CD8-positive, alpha-beta memory T cell (primary cell): ENCODE measurements at regions of chr12 and their contacts with region 1.

Region 1: DNA sequence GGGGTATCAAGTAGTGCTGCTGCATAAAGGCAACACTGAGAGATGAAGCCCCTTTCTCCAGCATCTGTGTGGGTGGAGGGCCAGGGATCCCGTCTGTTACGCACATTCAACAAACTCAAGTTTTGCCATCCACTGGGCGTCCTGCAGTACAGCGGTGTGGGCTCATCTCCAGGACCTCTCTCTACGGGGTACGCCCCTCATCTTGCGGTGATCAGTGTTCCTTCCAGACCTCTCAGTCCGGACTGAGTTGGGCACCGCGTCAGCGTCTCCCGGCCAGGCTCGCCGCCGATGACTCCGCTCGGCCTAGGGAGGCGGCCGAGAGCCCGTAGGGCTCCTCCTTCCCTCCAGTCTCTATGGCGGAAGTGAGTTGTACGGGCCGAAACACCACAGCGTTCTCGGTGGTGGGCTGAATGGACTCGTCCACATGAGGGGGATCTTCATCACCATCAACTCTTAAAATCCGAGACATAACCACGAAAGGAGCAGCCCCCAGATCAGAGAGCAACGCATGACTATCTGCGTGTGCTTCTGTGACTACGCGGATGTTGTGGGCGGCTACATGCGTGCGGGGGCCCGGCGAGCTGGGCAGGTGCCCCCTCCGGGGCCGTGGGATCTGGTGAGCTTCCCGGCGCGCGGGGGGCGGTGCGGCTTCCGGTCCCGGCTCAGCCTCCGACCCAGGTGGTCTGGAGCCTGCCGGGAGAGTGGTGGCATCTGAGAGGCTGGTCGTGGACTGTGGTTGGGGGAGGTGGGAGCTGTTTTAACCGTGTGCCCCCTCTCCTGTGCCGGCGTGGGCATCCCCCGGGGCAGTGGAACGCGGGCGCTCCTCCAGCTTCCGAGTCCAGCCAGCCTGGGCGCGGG is at the start of gene ATG101:
- DNase-seq: peak; percentile 75 to 92 (median 90)
- H3K4me3 ChIP-seq: peak within 1 kb of the TSS; percentile 95
- H3K4me3 Mint-ChIP-seq: peak within 1 kb of the TSS; percentile 94 to 99 (median 98)
- H3K27ac ChIP-seq: peak within 1 kb of the TSS; percentile 90
- H3K27ac Mint-ChIP-seq: peak within 1 kb of the TSS; percentile 96 to 100 (median 99)
- H3K4me1 ChIP-seq: peaks cover 36% of the 10 kb centered on the region
- H3K4me1 Mint-ChIP-seq: peaks cover 40 to 51% (median 48%) of the 10 kb centered on the region in 3 donors
- H3K27me3 ChIP-seq: no peaks in the 10 kb centered on the region
- H3K27me3 Mint-ChIP-seq: peaks cover 3 to 14% of the 10 kb centered on the region in 2 donors
- total RNA-seq, gene ATG101: 49.7 to 56.2 TPM

Region 2: DNA sequence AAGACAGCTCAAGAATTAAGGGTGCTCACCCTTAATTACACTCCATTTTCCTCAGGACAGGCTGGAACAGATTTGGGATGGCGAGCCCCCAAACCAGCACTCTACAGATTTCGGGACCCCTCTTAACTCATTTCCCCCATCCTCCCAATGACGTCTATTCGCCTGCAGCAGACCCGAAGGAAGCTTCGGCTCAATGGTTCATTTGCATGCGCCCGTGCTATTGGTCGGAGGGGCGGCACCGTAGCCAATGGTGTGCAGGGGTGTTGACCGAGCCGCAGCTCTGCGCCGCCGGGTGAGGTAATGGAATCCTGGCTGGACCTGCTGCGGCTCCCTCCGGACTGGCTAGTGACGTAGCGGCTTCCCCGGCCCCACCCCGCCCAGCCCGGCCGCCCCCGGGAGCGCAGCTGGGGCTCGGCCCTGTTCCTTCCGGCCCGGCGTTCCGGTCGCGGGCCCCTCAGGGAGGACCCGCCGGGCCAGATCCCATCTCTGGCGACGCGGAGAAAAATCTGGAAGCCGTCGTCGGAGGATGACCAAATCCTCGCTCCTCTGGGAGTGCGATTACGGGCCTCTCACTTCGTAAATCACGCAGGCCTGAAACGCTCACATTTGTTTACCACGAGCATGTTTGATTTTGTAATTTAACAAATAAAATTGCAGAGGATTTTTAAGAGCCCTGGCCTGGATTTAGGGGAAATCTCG is 36.6 kb before region 1 on chr12:
- CTCF ChIA-PET with region 1: interaction called, 580 read pairs
- POLR2A ChIA-PET with region 1: interaction called, 15 read pairs
- DNase-seq: peak; percentile 83 to 93 (median 89)
- H3K4me3 ChIP-seq: peak overlapping the region; percentile 46
- H3K4me3 Mint-ChIP-seq: peak overlapping the region; percentile 59 to 90 (median 82)
- H3K27ac ChIP-seq: peak overlapping the region; percentile 58
- H3K27ac Mint-ChIP-seq: peak overlapping the region; percentile 79 to 98 (median 95)
- H3K4me1 ChIP-seq: peaks cover 28% of the 10 kb centered on the region
- H3K4me1 Mint-ChIP-seq: peaks cover 21 to 42% (median 28%) of the 10 kb centered on the region in 3 donors
- H3K27me3 ChIP-seq: no peaks in the 10 kb centered on the region
- H3K27me3 Mint-ChIP-seq: peaks cover 0 to 2% of the 10 kb centered on the region in 2 donors

Region 3: GRCh38 chr12:52050761-52051541 is 18.6 kb before region 1 on chr12 and contains the start of gene NR4A1:
- CTCF ChIA-PET with region 1: interaction called, 17 read pairs
- POLR2A ChIA-PET with region 1: interaction called, 20 read pairs
- DNase-seq: peak; percentile 99 to 100 (median 99)
- H3K4me3 ChIP-seq: peak within 1 kb of the TSS; percentile 91
- H3K4me3 Mint-ChIP-seq: peak within 1 kb of the TSS; percentile 79 to 99 (median 94)
- H3K27ac ChIP-seq: peak within 1 kb of the TSS; percentile 90
- H3K27ac Mint-ChIP-seq: peak within 1 kb of the TSS; percentile 85 to 100 (median 98)
- H3K4me1 ChIP-seq: peaks cover 27% of the 10 kb centered on the region
- H3K4me1 Mint-ChIP-seq: peaks cover 24 to 39% (median 28%) of the 10 kb centered on the region in 3 donors
- H3K27me3 ChIP-seq: no peaks in the 10 kb centered on the region
- H3K27me3 Mint-ChIP-seq: peaks cover 0 to 2% of the 10 kb centered on the region in 2 donors
- total RNA-seq, gene NR4A1: 20.4 to 23.4 TPM

Region 4: DNA sequence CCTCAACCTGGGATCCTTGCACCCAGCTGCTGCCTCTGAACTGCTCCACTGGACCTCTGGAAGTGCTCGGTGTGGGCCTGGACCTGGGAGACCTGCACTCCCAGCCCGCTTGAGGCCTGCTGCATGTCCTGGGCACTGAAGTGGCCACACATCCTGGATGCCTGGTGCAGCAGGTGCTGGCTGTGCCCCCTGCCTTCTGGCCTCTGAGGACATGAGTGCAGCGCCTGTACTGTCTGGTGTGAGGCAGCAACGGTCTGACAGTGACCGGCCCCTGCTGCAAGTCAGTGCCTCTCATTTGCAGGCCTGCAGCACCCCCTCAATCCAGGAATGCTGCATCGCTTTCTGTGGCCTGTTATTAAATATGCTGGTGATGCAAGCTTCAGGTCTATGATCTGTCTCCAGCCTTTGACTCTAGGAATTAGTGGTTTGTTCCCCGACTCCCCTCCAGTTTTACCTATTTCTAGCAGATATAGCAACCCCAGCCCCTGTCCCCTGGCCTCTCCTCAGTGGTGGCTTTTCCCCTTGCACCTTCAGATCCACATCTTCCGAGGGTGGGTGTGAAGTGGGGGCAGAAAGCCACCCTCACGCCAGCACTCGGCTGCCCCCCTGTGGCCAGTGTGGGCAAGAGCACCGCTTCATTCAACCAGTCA is 13.6 kb after region 1 on chr12:
- CTCF ChIA-PET with region 1: interaction called, 35 read pairs
- POLR2A ChIA-PET with region 1: interaction called, 3 read pairs
- DNase-seq: peak; percentile 58 to 77 (median 60)
- H3K4me3 ChIP-seq: no peak overlapping the region
- H3K4me3 Mint-ChIP-seq: no peak overlapping the region
- H3K27ac ChIP-seq: no peak overlapping the region
- H3K27ac Mint-ChIP-seq: peak overlapping the region in 2 of 8 donors; percentile 68 to 77
- H3K4me1 ChIP-seq: peaks cover 4% of the 10 kb centered on the region
- H3K4me1 Mint-ChIP-seq: peaks cover 2 to 6% (median 6%) of the 10 kb centered on the region in 3 donors
- H3K27me3 ChIP-seq: no peaks in the 10 kb centered on the region
- H3K27me3 Mint-ChIP-seq: peaks cover 6 to 15% of the 10 kb centered on the region in 2 donors

Region 5: GRCh38 chr12:52119398-52120254 is 50.1 kb after region 1 on chr12:
- CTCF ChIA-PET with region 1: no interaction called
- POLR2A ChIA-PET with region 1: no interaction called
- DNase-seq: peak in 3 of 5 donors; percentile 20 to 38 (median 21)
- H3K4me3 ChIP-seq: no peak overlapping the region
- H3K4me3 Mint-ChIP-seq: peak overlapping the region in 1 of 7 donors; percentile 25
- H3K27ac ChIP-seq: no peak overlapping the region
- H3K27ac Mint-ChIP-seq: no peak overlapping the region
- H3K4me1 ChIP-seq: no peaks in the 10 kb centered on the region
- H3K4me1 Mint-ChIP-seq: peaks cover 8 to 22% (median 9%) of the 10 kb centered on the region in 3 donors
- H3K27me3 ChIP-seq: no peaks in the 10 kb centered on the region
- H3K27me3 Mint-ChIP-seq: peaks cover 12 to 46% of the 10 kb centered on the region in 2 donors

Region 6: GRCh38 chr12:52181746-52182145 is 112.2 kb after region 1 on chr12:
- CTCF ChIA-PET with region 1: no interaction called
- POLR2A ChIA-PET with region 1: no interaction called
- DNase-seq: no peak
- H3K4me3 ChIP-seq: no peak overlapping the region
- H3K4me3 Mint-ChIP-seq: no peak overlapping the region
- H3K27ac ChIP-seq: no peak overlapping the region
- H3K27ac Mint-ChIP-seq: no peak overlapping the region
- H3K4me1 ChIP-seq: no peaks in the 10 kb centered on the region
- H3K4me1 Mint-ChIP-seq: peaks cover 0 to 5% (median 3%) of the 10 kb centered on the region in 3 donors
- H3K27me3 ChIP-seq: no peaks in the 10 kb centered on the region
- H3K27me3 Mint-ChIP-seq: peaks cover 0 to 2% of the 10 kb centered on the region in 2 donors

Region 7: DNA sequence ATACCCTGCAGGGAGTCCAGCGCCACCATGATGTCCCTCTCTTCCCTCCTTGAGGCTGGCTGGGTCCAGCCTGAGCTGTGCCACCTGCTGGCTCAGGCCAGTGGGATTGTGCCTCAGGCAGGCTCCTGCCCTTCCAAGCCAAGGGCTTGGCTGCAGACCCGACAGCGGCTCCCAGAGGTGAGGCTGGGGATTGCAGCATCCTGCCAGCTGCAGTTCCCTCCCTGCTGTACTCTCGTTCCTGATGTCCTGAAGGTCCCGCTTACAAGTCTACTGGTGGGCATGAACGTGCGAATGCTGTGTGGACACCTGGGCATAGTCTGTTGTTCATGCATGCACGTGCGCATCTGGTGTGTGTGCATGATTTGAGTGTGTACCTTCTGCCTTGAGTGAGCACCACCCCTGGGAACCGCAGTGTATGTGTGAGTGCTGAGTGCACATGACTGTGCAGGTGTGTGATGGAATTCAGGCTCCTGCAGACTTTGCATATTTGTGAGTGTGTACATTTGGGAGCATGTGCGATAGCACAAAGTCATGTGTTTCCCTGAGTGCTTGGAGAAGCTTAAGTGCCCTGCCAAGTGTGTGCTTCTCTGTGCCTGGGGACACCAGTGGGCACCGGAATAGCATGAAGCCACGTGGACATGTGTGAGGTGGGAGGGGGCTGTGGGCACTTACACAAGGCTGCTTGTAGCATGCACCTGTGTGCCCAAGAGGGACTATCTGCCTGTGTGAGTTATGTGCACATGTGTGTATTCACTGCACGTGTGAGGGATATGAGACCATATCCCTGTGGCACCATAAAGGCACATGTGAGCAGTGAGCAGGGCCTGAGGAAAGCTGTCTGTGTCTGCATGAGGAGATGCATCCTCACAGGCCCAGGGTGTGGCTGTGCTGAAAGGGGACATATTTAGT is 144.2 kb after region 1 on chr12:
- CTCF ChIA-PET with region 1: no interaction called
- POLR2A ChIA-PET with region 1: no interaction called
- DNase-seq: peak in 4 of 5 donors; percentile 21 to 50 (median 28)
- H3K4me3 ChIP-seq: no peak overlapping the region
- H3K4me3 Mint-ChIP-seq: peak overlapping the region in 1 of 7 donors; percentile 67
- H3K27ac ChIP-seq: no peak overlapping the region
- H3K27ac Mint-ChIP-seq: no peak overlapping the region
- H3K4me1 ChIP-seq: no peaks in the 10 kb centered on the region
- H3K4me1 Mint-ChIP-seq: no peaks in the 10 kb centered on the region
- H3K27me3 ChIP-seq: no peaks in the 10 kb centered on the region
- H3K27me3 Mint-ChIP-seq: peaks cover 18 to 28% of the 10 kb centered on the region in 2 donors

Region 8: GRCh38 chr12:52404956-52405355 is 335.4 kb after region 1 on chr12:
- CTCF ChIA-PET with region 1: no interaction called
- POLR2A ChIA-PET with region 1: no interaction called
- DNase-seq: no peak
- H3K4me3 ChIP-seq: no peak overlapping the region
- H3K4me3 Mint-ChIP-seq: no peak overlapping the region
- H3K27ac ChIP-seq: no peak overlapping the region
- H3K27ac Mint-ChIP-seq: no peak overlapping the region
- H3K4me1 ChIP-seq: no peaks in the 10 kb centered on the region
- H3K4me1 Mint-ChIP-seq: no peaks in the 10 kb centered on the region
- H3K27me3 ChIP-seq: no peaks in the 10 kb centered on the region
- H3K27me3 Mint-ChIP-seq: peaks cover 3 to 31% of the 10 kb centered on the region in 2 donors